ENCODE measurements at regions of chr3 and their contacts with region 1.

Region 1: DNA sequence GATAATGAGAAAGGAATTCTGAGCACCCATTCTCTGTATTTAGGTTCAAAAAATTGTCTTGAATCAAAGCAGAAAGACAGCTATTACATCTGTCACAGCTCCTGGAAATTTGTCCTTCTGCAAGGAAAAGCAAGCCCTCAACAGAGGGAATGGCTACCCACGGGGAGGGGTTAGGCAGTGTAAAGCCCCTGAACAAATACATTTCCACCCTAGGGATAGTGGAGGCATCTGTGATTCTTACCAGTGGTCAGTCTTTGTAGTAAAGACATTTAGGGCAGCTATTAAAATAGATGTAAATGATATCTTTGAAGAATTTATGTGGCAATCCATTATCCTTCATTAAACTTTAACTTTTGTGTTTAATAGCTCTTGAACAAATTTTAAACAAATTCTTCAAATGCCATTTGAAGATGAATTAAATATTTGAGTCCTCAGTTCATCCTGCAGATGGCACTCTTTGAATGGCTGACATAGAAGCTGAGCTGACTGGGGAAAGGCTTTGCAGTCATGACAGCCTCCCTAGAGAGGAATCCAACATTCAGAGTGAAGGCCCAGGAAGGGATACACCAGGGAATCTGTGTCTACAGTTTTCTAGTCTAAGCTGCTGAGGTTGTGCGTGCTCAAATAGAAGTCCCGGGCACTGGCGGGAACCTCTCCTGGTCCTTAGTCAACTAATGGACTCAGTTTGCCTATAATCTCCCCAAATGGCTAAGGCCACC is 359.7 kb upstream of the ROPN1 start:
- DNase-seq: no peak
- ATAC-seq: peak; percentile 84 to 95 (median 91)
- H3K4me3 ChIP-seq: no peak overlapping the region
- H3K27ac ChIP-seq: no peak overlapping the region
- H3K4me1 ChIP-seq: no peaks in the 10 kb centered on the region
- H3K27me3 ChIP-seq: no peaks in the 10 kb centered on the region
- CTCF ChIP-seq: peak; percentile 57 to 84 (median 69)
- POLR2A ChIP-seq: no peak

Region 2: GRCh38 chr3:124084022-124084881 is 267.3 kb before region 1 on chr3:
- intact Hi-C with region 1: no loop called
- DNase-seq: no peak
- ATAC-seq: no peak
- H3K4me3 ChIP-seq: no peak overlapping the region
- H3K27ac ChIP-seq: no peak overlapping the region
- H3K4me1 ChIP-seq: no peaks in the 10 kb centered on the region
- H3K27me3 ChIP-seq: no peaks in the 10 kb centered on the region
- CTCF ChIP-seq: no peak
- POLR2A ChIP-seq: no peak

Region 3: DNA sequence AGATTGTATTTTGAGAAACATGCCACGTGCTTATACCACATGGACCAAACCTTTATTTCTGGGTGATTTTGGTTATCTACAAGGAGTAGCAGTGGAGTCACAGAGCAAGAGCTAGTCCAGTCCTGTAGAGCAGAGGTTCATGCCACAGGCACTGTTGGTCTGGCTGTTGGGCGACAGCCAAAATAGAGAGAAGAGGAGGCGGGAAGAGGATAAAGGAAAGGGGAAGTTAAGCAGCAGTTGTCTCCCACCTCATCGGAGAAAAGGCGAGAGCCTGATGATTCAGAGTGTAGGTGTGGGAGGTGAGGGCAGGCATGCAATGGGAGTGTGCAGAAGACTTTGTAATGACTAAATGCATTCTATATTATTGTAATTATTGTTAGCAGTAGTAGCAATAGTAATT is 122.2 kb before region 1 on chr3:
- intact Hi-C with region 1: no loop called
- DNase-seq: no peak
- ATAC-seq: no peak
- H3K4me3 ChIP-seq: no peak overlapping the region
- H3K27ac ChIP-seq: no peak overlapping the region
- H3K4me1 ChIP-seq: no peaks in the 10 kb centered on the region
- H3K27me3 ChIP-seq: no peaks in the 10 kb centered on the region
- CTCF ChIP-seq: no peak
- POLR2A ChIP-seq: no peak

Region 4: GRCh38 chr3:124467980-124468902 is 116.7 kb after region 1 on chr3:
- intact Hi-C with region 1: loop called (anchors 5 kb)
- DNase-seq: peak; percentile 51 to 61 (median 61)
- ATAC-seq: peak; percentile 96 to 97 (median 97)
- H3K4me3 ChIP-seq: no peak overlapping the region
- H3K27ac ChIP-seq: no peak overlapping the region
- H3K4me1 ChIP-seq: no peaks in the 10 kb centered on the region
- H3K27me3 ChIP-seq: no peaks in the 10 kb centered on the region
- CTCF ChIP-seq: peak; percentile 94 to 98 (median 95)
- POLR2A ChIP-seq: no peak

Region 5: DNA sequence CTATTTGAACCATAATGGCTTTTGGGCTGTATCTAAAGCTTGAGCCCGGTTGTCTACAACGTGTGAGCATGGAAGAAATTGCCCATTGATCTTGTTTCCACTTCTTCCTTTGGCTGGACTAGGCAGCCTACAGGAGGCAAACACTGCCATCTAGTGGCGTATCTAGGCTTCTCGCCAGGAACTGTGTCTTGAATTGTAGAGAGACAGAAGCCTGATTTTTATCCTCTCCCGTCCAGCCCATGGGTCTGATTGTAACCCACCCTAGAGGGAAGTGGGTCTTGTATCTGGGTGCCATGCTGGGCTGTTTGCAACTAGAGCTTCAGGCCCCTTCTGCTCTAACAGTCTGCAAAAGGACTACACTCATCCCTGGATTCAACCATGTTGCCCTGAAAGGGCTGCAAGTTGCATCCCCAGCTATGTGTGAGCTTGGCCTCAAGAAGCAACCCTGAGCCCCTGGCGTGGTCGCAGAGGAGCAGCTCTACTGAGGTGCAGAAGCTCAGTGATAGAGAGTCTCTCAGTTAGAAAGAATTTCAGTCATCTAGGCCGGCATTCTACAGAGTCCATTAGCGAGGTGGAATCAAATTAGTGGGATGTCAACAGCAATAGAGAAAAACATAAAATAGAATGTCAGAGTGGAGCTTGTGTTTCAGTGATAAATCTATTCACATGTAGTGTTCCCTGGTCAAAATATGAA is 208.4 kb after region 1 on chr3:
- intact Hi-C with region 1: no loop called
- DNase-seq: peak; percentile 60 to 79 (median 68)
- ATAC-seq: peak; percentile 79 to 90 (median 84)
- H3K4me3 ChIP-seq: no peak overlapping the region
- H3K27ac ChIP-seq: no peak overlapping the region
- H3K4me1 ChIP-seq: peaks cover 0 to 18% (median under 1%) of the 10 kb centered on the region in 4 donors
- H3K27me3 ChIP-seq: no peaks in the 10 kb centered on the region
- CTCF ChIP-seq: peak; percentile 74 to 91 (median 88)
- POLR2A ChIP-seq: no peak